Psoas muscle (tissue), 8 donors: ENCODE measurements at regions of chr3 and their contacts with region 1.

Region 1: GRCh38 chr3:123652346-123652984 is 67.6 kb upstream of the HACD2 start:
- DNase-seq: peak; percentile 77 to 87
- ATAC-seq: peak; percentile 90 to 95 (median 91)
- H3K4me3 ChIP-seq: no peak overlapping the region
- H3K27ac ChIP-seq: peak overlapping the region; percentile 36
- H3K4me1 ChIP-seq: peaks cover 10% of the 10 kb centered on the region
- H3K27me3 ChIP-seq: no peaks in the 10 kb centered on the region
- CTCF ChIP-seq: peak; percentile 88

Region 2: GRCh38 chr3:123700791-123701722 is 48.6 kb after region 1 on chr3:
- intact Hi-C with region 1: loop called in 1 of 2 experiments (anchors 5 kb)
- DNase-seq: no peak
- ATAC-seq: peak in 1 of 4 donors; percentile 30
- H3K4me3 ChIP-seq: peak overlapping the region; percentile 53
- H3K27ac ChIP-seq: peak overlapping the region; percentile 46
- H3K4me1 ChIP-seq: no peaks in the 10 kb centered on the region
- H3K27me3 ChIP-seq: no peaks in the 10 kb centered on the region
- CTCF ChIP-seq: no peak

Region 3: DNA sequence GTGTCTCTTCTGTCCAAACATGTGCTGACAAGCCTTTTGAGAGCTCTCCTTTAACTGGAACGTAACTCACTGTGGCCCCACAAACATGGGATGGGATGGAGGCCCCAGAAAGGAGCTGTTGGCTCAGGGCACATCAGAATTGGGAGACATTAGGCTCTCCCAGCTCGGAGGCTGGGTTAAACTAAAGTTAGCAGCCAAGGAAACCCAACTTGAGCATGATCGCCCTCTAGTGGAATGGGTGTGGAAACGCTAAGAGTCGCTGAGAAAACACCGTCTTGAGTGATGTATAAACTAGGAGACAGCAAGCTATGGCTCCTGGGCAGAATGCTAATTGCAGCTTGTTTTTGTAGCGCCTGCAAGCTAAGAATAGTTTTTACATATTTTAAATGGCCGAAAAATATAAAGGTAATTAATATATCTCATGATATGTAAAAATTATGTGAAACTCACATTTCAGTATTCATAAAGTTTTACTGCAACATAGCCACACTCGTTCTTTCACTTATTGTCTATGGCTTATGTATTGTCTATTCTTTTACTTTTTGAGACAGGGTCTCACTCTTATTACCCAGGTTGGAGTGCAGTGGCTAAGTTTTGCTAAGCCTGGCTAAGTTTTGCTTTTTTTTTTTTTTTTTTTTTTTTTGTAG is 71.2 kb after region 1 on chr3:
- intact Hi-C with region 1: loop called (anchors 1 to 5 kb)
- DNase-seq: no peak
- ATAC-seq: peak; percentile 49 to 79 (median 71)
- H3K4me3 ChIP-seq: no peak overlapping the region
- H3K27ac ChIP-seq: no peak overlapping the region
- H3K4me1 ChIP-seq: no peaks in the 10 kb centered on the region
- H3K27me3 ChIP-seq: peaks cover 0 to 3% (median 0%) of the 10 kb centered on the region in 3 donors
- CTCF ChIP-seq: peak; percentile 70